ENCODE measurements at regions of chr12 and their contacts with region 1.

Region 1: DNA sequence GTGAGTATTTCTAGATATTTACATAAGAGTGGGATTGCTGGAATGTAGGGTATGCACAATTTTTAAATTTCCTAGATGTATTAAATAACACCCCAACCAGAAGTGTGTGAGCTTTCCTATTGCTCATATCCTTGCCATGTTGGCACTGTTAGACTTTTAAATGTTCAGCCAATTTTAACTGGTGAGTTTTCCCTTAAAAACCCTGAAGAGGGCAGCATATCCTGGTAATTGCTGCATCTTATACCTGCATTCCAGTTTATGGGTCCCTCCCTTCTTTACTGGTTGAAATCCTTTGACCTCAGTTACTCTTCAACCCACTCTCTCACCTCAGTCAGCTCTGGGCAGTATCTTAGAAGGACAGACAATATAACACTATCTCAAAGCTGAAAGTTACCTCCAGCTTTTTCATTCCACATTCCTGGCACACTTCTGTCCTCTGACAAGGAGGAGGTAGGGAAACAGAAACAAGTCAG is 270.6 kb downstream of the PAWR start:
- DNase-seq: peak; percentile 84
- H3K4me3 ChIP-seq: no peak overlapping the region
- H3K27ac ChIP-seq: peak overlapping the region; percentile 73
- H3K27me3 ChIP-seq: no peaks in the 10 kb centered on the region
- CTCF ChIP-seq: peak; percentile 71

Region 2: GRCh38 chr12:79407671-79408622 is 12.2 kb before region 1 on chr12:
- CTCF ChIA-PET with region 1: interaction called, 19 read pairs
- POLR2A ChIA-PET with region 1: no interaction called
- DNase-seq: peak; percentile 81
- H3K4me3 ChIP-seq: no peak overlapping the region
- H3K27ac ChIP-seq: peak overlapping the region; percentile 22
- H3K27me3 ChIP-seq: no peaks in the 10 kb centered on the region
- CTCF ChIP-seq: peak; percentile 91

Region 3: DNA sequence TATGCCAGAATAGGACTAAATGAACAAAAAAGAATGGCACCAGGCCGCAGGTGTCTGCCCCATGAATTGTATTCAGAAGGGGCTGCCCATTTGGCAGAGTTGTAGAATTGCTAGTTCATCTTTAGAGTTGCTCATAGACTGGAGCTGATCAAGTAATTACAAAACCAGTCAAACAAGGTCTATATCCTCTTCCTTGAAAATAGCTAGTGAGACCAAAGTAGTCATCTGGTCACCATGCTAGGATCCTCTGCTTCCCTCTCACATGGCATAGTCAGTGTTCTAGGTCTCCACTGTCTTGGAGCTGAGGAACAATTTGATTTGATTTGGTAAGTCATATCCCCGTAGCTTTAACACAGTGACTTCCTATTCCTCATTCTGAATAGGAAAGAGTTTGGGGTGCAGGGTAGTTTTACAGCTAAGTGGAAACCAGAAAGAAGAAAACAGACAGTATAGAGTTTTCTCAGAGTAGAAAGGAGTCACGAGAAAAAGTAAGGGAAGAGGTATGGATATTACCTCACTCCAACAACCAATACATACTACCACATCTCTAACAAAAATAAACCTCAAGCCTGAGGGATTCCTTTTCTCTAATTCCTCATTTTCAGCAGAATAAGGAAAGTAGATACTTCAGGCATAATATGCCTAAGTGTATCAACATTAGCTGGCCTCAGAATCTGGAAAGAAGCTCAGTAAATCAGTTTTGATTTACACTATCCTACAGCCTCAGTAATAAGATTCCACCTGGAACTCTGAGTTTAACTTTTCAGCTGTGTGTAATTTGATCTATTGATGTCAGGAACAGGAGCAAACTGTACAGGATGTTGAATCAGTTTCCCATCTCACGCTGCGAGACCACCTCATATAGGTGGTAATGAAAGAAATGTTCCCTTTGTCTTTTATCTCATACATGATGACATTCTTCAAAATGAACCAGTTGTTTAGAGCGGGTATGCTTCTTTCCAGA is 18.6 kb after region 1 on chr12:
- CTCF ChIA-PET with region 1: interaction called, 10 read pairs
- POLR2A ChIA-PET with region 1: no interaction called
- DNase-seq: no peak
- H3K4me3 ChIP-seq: no peak overlapping the region
- H3K27ac ChIP-seq: peak overlapping the region; percentile 25
- H3K27me3 ChIP-seq: no peaks in the 10 kb centered on the region
- CTCF ChIP-seq: no peak

Region 4: DNA sequence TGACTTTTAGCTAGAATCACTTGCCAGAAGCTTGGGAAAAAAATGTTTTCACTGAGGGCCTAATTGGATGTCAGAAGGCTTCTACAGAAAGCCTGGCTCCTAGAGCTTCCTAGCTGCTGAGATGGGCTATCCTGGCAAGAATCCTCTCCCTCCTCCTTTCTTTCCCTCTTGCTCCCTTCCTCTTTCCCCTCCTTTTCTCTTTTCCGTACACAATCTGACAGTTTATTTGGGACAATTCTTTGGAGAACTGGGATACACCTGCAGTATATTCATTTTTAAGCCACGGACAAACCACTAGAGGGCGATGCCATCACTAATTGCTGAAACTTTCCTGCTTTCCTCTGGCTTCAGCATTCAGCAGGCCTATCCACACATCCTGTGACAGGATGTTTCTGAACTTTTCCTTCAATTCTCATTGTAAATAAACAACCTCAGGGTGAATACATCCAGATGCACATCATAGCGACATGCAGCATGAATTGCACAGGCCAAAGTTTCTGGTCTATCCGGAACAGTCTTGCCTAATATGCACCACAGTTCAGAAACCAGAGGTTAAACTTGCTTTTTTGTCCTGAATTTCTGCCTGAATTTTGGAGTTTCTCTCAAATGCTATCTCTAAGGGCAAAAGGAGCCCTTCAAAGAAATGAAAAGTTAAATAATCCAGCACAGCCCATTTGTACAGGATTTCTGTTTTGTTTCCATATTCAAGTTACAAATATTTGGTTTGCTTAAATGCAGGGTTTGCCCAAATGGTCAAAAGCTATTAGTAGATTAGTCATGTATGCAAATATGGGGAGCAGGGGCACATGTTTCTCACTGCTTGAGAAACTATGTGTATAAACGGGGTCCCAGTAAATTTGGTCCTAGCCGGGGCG is 127.8 kb after region 1 on chr12:
- CTCF ChIA-PET with region 1: interaction called, 14 read pairs
- POLR2A ChIA-PET with region 1: interaction called, 8 read pairs
- DNase-seq: no peak
- H3K4me3 ChIP-seq: no peak overlapping the region
- H3K27ac ChIP-seq: peak overlapping the region; percentile 89
- H3K27me3 ChIP-seq: no peaks in the 10 kb centered on the region
- CTCF ChIP-seq: peak; percentile 78

Region 5: GRCh38 chr12:79597910-79598309 is 177.7 kb after region 1 on chr12:
- CTCF ChIA-PET with region 1: no interaction called
- POLR2A ChIA-PET with region 1: no interaction called
- DNase-seq: no peak
- H3K4me3 ChIP-seq: no peak overlapping the region
- H3K27ac ChIP-seq: no peak overlapping the region
- H3K27me3 ChIP-seq: no peaks in the 10 kb centered on the region
- CTCF ChIP-seq: no peak

Region 6: DNA sequence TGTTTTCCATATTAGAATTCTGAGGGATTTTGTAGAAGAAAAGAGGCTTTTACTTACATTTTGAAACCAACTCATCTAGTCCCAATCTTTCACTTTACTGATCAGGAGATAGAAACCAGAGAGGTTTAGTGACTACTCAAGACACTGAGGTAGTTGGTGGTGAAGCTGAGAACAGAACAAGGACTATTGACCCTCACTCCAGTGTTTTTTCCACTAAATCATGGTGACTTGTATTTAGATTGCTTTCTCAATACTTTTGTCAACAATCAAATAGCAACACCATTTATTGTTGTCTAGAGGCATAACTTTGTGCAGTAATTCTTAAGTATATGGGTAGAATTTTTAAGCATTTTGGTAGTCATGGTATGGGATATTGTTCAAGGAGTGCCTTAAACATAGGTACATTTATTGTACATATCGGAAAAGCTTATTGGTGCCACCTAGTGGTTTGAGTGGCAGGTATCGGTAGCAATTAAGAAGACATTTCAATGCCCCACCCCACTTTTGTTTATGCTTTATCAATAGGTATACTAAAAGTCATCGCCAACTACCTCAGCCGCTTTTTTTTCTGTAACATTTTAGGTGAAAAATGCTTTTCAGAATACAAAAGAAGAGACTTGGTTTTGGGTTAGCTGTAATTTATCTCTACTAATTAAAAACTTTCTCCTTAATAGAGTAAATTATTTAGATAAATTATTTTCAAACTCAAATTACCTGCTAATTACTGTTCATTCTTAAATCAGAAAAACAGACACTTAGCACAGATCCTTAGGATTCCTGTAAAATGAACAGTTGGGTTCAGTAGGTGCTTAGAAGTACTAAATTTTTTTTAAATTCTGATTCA is 317.9 kb after region 1 on chr12:
- CTCF ChIA-PET with region 1: interaction called, 13 read pairs
- POLR2A ChIA-PET with region 1: no interaction called
- DNase-seq: no peak
- H3K4me3 ChIP-seq: no peak overlapping the region
- H3K27ac ChIP-seq: no peak overlapping the region
- H3K27me3 ChIP-seq: no peaks in the 10 kb centered on the region
- CTCF ChIP-seq: peak; percentile 71